ENCODE measurements at regions of chr6 and their contacts with region 1.

Region 1: GRCh38 chr6:157461000-157461915 is 80.3 kb downstream of the ZDHHC14 start:
- DNase-seq: no peak
- H3K4me3 ChIP-seq: no peak overlapping the region
- H3K27ac ChIP-seq: no peak overlapping the region
- H3K4me1 ChIP-seq: peaks cover 5% of the 10 kb centered on the region
- H3K27me3 ChIP-seq: no peaks in the 10 kb centered on the region
- CTCF ChIP-seq: no peak

Region 2: GRCh38 chr6:157034436-157035230 is 426.6 kb before region 1 on chr6:
- CTCF ChIA-PET with region 1: no interaction called
- POLR2A ChIA-PET with region 1: no interaction called
- intact Hi-C with region 1: no loop called
- DNase-seq: peak; percentile 74
- H3K4me3 ChIP-seq: no peak overlapping the region
- H3K27ac ChIP-seq: no peak overlapping the region
- H3K4me1 ChIP-seq: peaks cover 34% of the 10 kb centered on the region
- H3K27me3 ChIP-seq: no peaks in the 10 kb centered on the region
- CTCF ChIP-seq: peak; percentile 71

Region 3: DNA sequence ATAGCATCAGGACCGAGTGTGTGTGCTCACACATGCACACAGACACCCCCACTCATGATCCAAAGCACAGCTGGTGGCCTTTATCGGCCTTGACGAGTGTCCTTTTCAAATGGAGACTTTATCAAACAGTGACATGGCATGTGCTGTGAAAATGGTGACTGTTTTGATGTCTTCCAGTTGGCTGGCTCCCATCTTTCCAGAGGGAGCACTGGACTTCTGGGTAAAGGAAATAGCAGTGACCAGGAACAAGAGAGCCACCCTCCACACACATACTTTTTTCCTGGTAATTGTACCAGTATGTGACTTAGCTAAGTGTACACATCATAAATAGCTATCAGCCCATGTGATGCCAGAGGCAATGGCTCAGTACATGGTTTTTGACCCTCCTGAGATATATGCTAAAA is 27.6 kb before region 1 on chr6:
- CTCF ChIA-PET with region 1: no interaction called
- POLR2A ChIA-PET with region 1: interaction called, 11 read pairs
- intact Hi-C with region 1: no loop called
- DNase-seq: no peak
- H3K4me3 ChIP-seq: no peak overlapping the region
- H3K27ac ChIP-seq: no peak overlapping the region
- H3K4me1 ChIP-seq: peaks cover 10% of the 10 kb centered on the region
- H3K27me3 ChIP-seq: no peaks in the 10 kb centered on the region
- CTCF ChIP-seq: no peak

Region 4: DNA sequence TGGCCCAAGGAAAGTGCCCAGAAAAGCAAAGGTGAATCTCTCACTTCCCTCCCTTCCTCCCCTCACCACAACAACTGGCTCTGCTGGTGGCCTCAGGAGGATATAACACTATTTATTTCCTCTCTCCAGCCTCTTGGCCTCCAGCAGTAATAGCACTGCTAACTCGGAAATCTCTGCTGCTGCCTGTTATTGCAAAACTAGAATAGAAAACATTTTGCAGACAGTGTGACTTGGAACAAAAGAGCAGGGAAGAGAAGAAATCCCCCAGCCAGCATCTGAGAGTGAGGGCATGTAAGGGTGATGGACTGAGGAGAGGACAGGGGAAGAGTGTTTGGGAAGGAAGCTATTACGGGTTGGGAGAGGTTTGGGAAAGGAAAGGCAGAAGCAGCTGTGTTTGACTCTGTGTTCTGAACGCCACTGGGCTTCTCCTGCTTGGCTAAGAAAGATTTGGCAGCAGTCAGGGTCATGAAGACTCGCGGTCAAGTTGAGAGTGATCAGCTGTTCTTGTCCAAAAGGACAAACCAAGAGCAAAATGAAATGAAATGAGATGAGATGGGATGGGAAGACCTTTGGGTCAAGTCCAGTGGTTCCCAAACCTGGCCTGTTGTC is 280.8 kb after region 1 on chr6:
- CTCF ChIA-PET with region 1: no interaction called
- POLR2A ChIA-PET with region 1: no interaction called
- intact Hi-C with region 1: no loop called
- DNase-seq: no peak
- H3K4me3 ChIP-seq: no peak overlapping the region
- H3K27ac ChIP-seq: no peak overlapping the region
- H3K4me1 ChIP-seq: no peaks in the 10 kb centered on the region
- H3K27me3 ChIP-seq: no peaks in the 10 kb centered on the region
- CTCF ChIP-seq: no peak